PC-9 (cell line): ENCODE measurements at regions of chr3 and their contacts with region 1.

Region 1: GRCh38 chr3:151168269-151169094 is 34.5 kb downstream of the GPR171 start:
- DNase-seq: peak; percentile 53 to 73
- H3K4me3 ChIP-seq: no peak overlapping the region
- H3K27ac ChIP-seq: no peak overlapping the region
- H3K4me1 ChIP-seq: no peaks in the 10 kb centered on the region
- H3K27me3 ChIP-seq: no peaks in the 10 kb centered on the region
- CTCF ChIP-seq: peak; percentile 92

Region 2: DNA sequence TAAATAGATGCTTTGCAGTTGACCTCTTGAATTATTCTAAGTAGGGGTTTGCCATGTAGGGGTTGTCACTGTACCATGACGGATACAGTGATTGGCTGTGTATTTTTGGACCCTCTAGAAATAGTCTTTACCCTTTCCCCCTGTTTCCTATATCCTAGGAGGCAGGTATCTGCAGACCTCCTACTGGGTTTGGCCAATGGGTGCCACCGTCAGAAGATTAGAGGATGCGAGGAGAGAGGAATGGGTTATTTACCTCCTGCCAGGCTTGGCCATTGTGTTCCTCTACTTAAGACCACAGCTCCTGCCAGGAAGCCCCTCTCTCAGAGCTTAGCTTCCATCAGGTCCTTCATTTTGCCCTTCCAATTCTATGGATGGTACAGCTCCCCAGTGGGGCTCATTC is 155.7 kb before region 1 on chr3:
- CTCF ChIA-PET with region 1: no interaction called
- POLR2A ChIA-PET with region 1: no interaction called
- intact Hi-C with region 1: no loop called
- DNase-seq: no peak
- H3K4me3 ChIP-seq: no peak overlapping the region
- H3K27ac ChIP-seq: no peak overlapping the region
- H3K4me1 ChIP-seq: no peaks in the 10 kb centered on the region
- H3K27me3 ChIP-seq: no peaks in the 10 kb centered on the region
- CTCF ChIP-seq: no peak

Region 3: DNA sequence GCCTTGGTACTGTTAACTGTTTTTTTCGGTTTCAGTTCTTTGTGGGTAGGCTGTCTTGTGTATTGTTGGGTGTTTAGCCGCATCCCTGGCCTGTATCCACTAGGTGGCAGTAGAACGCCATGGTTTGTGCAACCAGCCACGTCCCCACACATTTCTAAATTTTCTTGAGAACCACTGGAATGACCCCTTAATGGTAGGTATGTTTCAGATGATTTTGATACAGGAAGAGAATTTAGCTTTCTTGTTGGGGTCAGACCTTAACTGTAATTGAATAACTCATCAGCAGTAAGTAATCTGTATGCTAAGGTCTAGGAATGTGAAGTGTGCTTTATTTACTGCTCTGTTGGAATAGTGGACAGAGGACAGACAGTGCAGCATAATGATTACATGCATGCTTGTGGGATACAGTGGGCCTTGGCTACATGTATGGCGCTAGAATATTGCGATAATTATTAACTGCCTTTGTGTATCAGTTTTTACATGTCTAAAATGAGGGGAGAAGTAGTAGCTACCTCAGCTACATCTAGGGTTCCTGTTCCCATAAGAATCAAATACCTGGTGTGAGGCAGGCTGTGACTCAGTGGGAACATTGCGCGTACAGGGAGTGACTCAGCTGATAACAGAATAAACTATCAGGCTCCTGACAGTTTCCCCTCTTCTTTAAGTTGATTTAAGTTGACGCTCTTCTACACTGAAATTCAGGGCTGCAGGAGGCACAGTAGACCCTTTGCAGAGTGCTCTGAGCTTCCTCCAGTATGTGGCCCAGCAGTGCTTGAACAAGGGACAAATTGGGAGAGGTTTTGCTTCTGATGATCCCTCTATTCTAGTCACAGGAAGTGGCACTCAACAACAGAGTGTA is 59.6 kb after region 1 on chr3:
- CTCF ChIA-PET with region 1: no interaction called
- POLR2A ChIA-PET with region 1: no interaction called
- intact Hi-C with region 1: loop called (anchors 5 kb)
- DNase-seq: peak; percentile 68 to 75
- H3K4me3 ChIP-seq: no peak overlapping the region
- H3K27ac ChIP-seq: peak overlapping the region; percentile 40
- H3K4me1 ChIP-seq: peaks cover 28% of the 10 kb centered on the region
- H3K27me3 ChIP-seq: no peaks in the 10 kb centered on the region
- CTCF ChIP-seq: peak; percentile 98

Region 4: GRCh38 chr3:151290673-151291072 is 122.2 kb after region 1 on chr3:
- CTCF ChIA-PET with region 1: interaction called, 10 read pairs
- POLR2A ChIA-PET with region 1: no interaction called
- intact Hi-C with region 1: no loop called
- DNase-seq: peak in 1 of 2 experiments; percentile 46
- H3K4me3 ChIP-seq: no peak overlapping the region
- H3K27ac ChIP-seq: no peak overlapping the region
- H3K4me1 ChIP-seq: no peaks in the 10 kb centered on the region
- H3K27me3 ChIP-seq: no peaks in the 10 kb centered on the region
- CTCF ChIP-seq: peak; percentile 88

Region 5: DNA sequence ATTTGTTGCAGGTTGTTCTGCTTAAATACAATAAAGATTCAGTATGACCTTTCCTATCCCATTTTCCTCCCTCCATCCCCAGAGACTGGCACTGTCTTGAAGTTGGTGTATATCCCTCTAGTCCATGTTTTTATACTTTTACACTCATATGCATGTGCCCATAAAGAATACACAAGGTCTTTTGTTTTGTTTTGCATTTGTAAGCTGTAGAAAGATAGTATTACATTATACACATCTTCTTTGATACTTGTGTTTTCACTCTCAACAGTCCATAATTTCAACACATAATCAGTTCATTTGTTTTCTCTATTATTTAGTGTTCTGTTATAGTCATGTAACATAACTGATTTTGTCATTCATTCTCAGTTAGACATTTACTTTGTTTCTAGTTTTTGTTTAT is 476.5 kb after region 1 on chr3:
- CTCF ChIA-PET with region 1: no interaction called
- POLR2A ChIA-PET with region 1: no interaction called
- intact Hi-C with region 1: loop called (anchors 5 kb)
- DNase-seq: no peak
- H3K4me3 ChIP-seq: no peak overlapping the region
- H3K27ac ChIP-seq: no peak overlapping the region
- H3K4me1 ChIP-seq: no peaks in the 10 kb centered on the region
- H3K27me3 ChIP-seq: no peaks in the 10 kb centered on the region
- CTCF ChIP-seq: no peak

Region 6: GRCh38 chr3:151918253-151919029 is 750.0 kb after region 1 on chr3:
- CTCF ChIA-PET with region 1: no interaction called
- POLR2A ChIA-PET with region 1: no interaction called
- intact Hi-C with region 1: loop called (anchors 1 kb)
- DNase-seq: peak in 1 of 2 experiments; percentile 49
- H3K4me3 ChIP-seq: no peak overlapping the region
- H3K27ac ChIP-seq: no peak overlapping the region
- H3K4me1 ChIP-seq: no peaks in the 10 kb centered on the region
- H3K27me3 ChIP-seq: no peaks in the 10 kb centered on the region
- CTCF ChIP-seq: peak; percentile 77